BJ (cell line): ENCODE measurements at regions of chr1 and their contacts with region 1.

Region 1: GRCh38 chr1:113963281-113963906 is 15.9 kb upstream of the OLFML3 start:
- DNase-seq: no peak
- H3K4me3 ChIP-seq: no peak overlapping the region
- H3K27me3 ChIP-seq: no peaks in the 10 kb centered on the region
- CTCF ChIP-seq: no peak

Region 2: DNA sequence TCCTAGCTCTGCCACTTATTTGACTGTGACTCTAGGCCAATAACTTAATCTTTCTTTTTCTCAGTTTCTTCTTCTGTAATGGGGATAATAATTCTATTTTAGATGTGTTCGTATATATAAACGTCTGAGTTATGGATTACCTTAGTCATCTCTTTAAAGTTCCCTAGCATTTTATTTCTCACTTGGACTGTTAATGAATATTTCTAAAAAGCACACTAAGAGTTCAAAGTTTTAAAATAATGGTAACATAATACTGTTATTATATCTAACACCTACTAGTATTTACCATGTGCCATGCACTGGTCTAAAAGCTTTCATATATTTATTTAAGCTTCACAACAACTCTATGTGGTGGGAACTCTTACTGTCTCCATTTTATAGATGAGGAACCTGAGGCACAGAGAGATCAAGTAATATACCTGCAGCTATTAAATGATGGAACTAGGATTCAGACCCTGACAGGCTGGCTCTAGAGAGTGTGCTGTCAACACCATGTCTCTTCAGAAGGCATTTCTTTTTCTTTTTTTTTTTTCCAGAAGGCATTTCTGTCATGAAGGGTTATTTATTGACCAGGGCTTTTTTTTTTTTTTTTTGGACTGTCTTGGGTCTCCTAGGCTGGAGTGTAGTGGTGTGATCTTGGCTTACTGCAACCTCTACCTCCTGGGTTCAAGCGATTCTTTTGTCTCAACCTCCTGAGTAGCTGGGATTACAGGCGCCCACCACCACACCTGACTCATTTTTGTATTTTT is 11.8 kb before region 1 on chr1:
- CTCF ChIA-PET with region 1: interaction called, 4 read pairs
- POLR2A ChIA-PET with region 1: interaction called, 15 read pairs
- DNase-seq: no peak
- H3K4me3 ChIP-seq: no peak overlapping the region
- H3K27me3 ChIP-seq: no peaks in the 10 kb centered on the region
- CTCF ChIP-seq: no peak

Region 3: GRCh38 chr1:114026797-114027196 is 63.4 kb after region 1 on chr1:
- CTCF ChIA-PET with region 1: no interaction called
- POLR2A ChIA-PET with region 1: interaction called, 13 read pairs
- DNase-seq: no peak
- H3K4me3 ChIP-seq: no peak overlapping the region
- H3K27me3 ChIP-seq: no peaks in the 10 kb centered on the region
- CTCF ChIP-seq: no peak